ENCODE measurements at regions of chr3 and their contacts with region 1.

Region 1: GRCh38 chr3:111978493-111979433 is at the start of gene ABHD10:
- DNase-seq: peak; percentile 90
- H3K4me3 ChIP-seq: peak within 1 kb of the TSS; percentile 84 to 92
- H3K27ac ChIP-seq: peak within 1 kb of the TSS; percentile 70 to 92
- H3K4me1 ChIP-seq: peaks cover 8 to 12% of the 10 kb centered on the region in 2 experiments; a peak in 3 of 4 replicates
- H3K27me3 ChIP-seq: no peaks in the 10 kb centered on the region
- CTCF ChIP-seq: no peak
- EP300 ChIP-seq: no peak
- RAD21 ChIP-seq: no peak
- polyA plus RNA-seq, gene ABHD10: 14.8 and 18.3 TPM in 2 replicates

Region 2: DNA sequence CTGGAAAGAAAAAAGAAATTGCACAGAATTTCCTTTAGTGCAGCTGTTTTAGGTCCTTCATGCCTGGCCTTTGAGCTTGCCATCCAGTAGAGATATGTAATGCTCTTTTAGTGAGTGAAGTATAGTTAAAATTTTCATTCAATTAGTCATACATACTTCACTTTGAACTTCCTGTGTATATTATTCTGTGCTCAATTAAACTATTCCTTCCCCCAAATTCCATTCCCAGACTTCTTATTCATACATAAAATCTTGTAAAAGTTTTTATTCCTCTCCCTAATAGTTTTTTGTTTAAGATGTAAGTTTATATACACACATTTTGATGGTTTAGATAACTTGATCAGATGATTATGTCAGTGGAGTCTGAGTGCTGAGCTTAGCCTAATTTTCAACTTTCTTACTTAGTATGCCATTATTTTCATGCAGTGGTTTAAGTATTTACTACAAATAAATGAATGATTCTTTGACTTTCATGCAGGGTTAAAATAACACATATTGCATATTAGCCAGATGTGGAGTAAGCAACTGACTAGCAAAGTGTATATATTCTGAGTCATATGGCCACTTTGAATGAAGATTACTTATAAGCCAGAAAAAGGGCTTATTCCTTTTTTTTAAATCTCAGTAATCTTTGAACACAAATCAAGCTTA is 42.4 kb before region 1 on chr3:
- CTCF ChIA-PET with region 1: no interaction called
- POLR2A ChIA-PET with region 1: no interaction called
- DNase-seq: no peak
- H3K4me3 ChIP-seq: no peak overlapping the region
- H3K27ac ChIP-seq: peak overlapping the region; percentile 71 to 95; a peak in 3 of 4 replicates
- H3K4me1 ChIP-seq: peaks cover 0 to 18% of the 10 kb centered on the region in 2 experiments; a peak in 3 of 4 replicates
- H3K27me3 ChIP-seq: no peaks in the 10 kb centered on the region
- CTCF ChIP-seq: no peak
- EP300 ChIP-seq: peak in 1 of 2 experiments; percentile 59; a peak in 1 of 4 replicates
- RAD21 ChIP-seq: no peak

Region 3: GRCh38 chr3:111989061-111989678 is 10.4 kb after region 1 on chr3:
- CTCF ChIA-PET with region 1: interaction called, 36 read pairs
- POLR2A ChIA-PET with region 1: interaction called, 6 read pairs
- DNase-seq: peak; percentile 57
- H3K4me3 ChIP-seq: peak overlapping the region in 1 of 2 experiments; percentile 5; a peak in 1 of 4 replicates
- H3K27ac ChIP-seq: 0 out of 4 replicates have a peak overlapping the region, but pooled peaks of 1 of the 2 experiments have one; percentile 7
- H3K4me1 ChIP-seq: peaks cover 0 to 5% of the 10 kb centered on the region in 2 experiments; a peak in 1 of 4 replicates
- H3K27me3 ChIP-seq: no peaks in the 10 kb centered on the region
- CTCF ChIP-seq: peak; percentile 86
- EP300 ChIP-seq: no peak
- RAD21 ChIP-seq: peak; percentile 77

Region 4: GRCh38 chr3:111998636-111999483 is 20.1 kb after region 1 on chr3 and contains the start of gene TAGLN3:
- CTCF ChIA-PET with region 1: interaction called, 6 read pairs
- POLR2A ChIA-PET with region 1: interaction called, 20 read pairs
- DNase-seq: peak; percentile 70
- H3K4me3 ChIP-seq: peak within 1 kb of the TSS; percentile 61 to 77
- H3K27ac ChIP-seq: peak within 1 kb of the TSS; percentile 29 to 96
- H3K4me1 ChIP-seq: peaks cover 12 to 33% of the 10 kb centered on the region in 2 experiments; a peak in 3 of 4 replicates
- H3K27me3 ChIP-seq: no peaks in the 10 kb centered on the region
- CTCF ChIP-seq: no peak
- EP300 ChIP-seq: no peak
- RAD21 ChIP-seq: no peak
- polyA plus RNA-seq, gene TAGLN3: 19.6 and 24.2 TPM in 2 replicates

Measured in SK-N-SH (cell line).